A673 (cell line): ENCODE measurements at regions of chr17 and their contacts with region 1.

Region 1: DNA sequence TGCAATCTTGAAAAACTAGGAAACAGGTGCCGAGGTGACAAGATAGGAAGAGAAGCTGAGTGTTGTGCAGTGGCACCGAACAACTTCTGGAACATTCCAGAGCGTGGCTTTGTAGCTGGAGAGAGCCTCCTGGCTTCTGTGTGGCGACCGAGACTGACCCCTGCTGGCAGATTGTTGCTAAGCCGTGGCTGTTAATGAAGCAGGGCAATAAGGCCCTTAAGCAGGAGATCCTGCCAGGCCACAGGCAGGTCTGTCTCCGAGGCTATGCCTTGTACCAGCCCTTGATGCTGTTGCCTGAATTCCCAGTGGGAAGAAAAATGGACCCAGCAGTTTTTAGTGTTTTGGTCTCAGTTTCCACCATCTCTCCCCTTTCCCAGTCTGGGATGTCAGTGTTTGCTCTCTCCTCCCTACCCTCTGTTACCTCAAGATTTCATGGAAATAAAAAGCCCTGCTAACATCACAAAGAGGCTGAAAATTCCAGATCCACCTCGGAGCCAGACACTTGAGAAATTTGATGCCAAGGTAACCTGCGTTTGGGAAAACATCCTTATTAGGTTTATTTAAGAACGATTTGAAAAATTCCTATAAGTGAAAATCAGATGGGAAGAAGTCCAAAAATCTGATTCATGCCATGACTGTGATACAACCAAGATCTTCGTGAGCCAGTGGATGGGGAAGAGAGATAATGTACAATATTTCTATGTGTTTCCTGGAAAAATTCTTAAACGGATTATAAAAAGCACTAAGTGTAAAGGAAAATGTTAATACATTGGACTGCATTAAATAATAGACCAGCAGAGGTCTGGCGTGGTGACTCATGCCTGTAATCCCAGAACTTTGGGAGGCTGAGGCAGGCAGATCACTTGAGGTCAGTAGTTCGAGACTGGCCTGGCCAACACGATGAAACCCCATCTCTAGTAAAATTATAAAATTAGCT is 265.1 kb downstream of the PRKCA start:
- DNase-seq: peak; percentile 76
- H3K4me3 ChIP-seq: no peak overlapping the region
- H3K27ac ChIP-seq: no peak overlapping the region
- H3K4me1 ChIP-seq: peaks cover 26% of the 10 kb centered on the region
- H3K27me3 ChIP-seq: no peaks in the 10 kb centered on the region
- CTCF ChIP-seq: peak; percentile 82

Region 2: GRCh38 chr17:65588176-65588808 is 979.2 kb before region 1 on chr17:
- CTCF ChIA-PET with region 1: interaction called, 12 read pairs
- POLR2A ChIA-PET with region 1: no interaction called
- intact Hi-C with region 1: no loop called
- DNase-seq: no peak
- H3K4me3 ChIP-seq: no peak overlapping the region
- H3K27ac ChIP-seq: no peak overlapping the region
- H3K4me1 ChIP-seq: peaks cover 6% of the 10 kb centered on the region
- H3K27me3 ChIP-seq: no peaks in the 10 kb centered on the region
- CTCF ChIP-seq: no peak